Right ventricle myocardium inferior (tissue), 1 donor: ENCODE measurements at regions of chr9 and their contacts with region 1.

Region 1: GRCh38 chr9:114082017-114082762 is 4.1 kb upstream of the AMBP start:
- DNase-seq: peak; percentile 82
- ATAC-seq: peak; percentile 89

Region 2: GRCh38 chr9:114291064-114291474 is 208.9 kb after region 1 on chr9:
- intact Hi-C with region 1: loop called (anchors 2 kb)
- DNase-seq: peak; percentile 87
- ATAC-seq: peak; percentile 58